ENCODE measurements at regions of chr17 and their contacts with region 1.

Region 1: DNA sequence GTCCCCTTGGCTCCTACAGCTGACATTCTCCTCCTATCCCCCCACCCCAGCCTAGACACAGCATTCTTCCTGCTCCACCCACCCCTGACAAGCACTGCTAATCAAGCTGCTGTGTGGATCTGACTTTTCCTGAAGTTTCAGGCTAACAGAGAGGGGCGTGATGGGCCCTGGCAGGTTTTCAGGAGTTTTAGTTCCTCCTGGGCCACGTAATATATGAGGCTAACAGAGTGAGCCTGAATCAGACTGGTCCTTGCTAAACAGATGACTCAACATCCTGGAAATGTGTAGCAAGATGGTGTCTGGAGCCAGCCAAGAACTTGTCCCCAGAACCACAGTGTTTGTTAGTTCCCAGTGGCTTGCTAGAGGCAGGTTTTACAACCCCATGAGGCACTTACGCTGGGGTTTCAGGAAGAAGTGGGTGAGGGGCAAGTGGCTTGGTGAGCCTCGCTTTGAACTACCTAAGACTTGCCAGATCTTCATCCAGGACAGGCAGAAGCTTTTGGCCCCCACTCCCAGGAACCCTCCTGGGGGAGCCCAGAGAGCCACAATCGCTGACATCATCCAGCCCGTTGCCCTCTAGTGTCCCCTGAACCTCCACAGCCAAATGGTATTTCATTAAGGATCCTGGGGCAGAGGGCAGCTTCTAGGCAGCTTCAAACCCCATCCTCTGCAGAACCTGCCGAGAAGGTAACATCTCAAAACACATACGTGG is 15.9 kb downstream of the TMEM92 start:
- DNase-seq: peak; percentile 96
- H3K4me3 ChIP-seq: peak overlapping the region; percentile 52
- CTCF ChIP-seq: no peak

Region 2: DNA sequence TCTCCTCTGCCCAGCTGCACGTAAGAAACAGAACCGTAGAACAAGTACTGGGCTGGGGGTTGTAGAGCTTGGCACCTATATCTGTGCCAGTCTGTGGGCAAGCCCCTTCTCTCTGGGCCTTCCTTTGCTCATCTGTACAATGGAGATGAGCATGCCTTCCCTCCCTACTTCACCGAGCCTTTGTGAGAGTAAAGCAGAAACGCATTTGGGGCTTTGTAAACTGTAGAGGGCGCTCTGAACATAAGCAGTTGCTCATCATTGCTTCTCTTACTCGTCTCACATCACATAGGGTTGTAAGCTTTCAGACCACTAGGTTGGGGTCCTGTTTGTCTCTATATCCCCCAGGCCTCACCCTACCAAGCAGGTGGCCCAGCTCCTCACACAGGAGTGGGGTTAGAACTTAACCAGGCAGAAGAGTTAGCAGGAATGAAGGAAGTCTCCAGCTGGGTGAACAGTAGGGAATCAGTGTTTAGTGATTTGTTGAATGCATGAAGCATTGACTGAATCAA is 175.2 kb before region 1 on chr17:
- CTCF ChIA-PET with region 1: interaction called, 62 read pairs
- POLR2A ChIA-PET with region 1: no interaction called
- DNase-seq: no peak
- H3K4me3 ChIP-seq: no peak overlapping the region
- CTCF ChIP-seq: peak; percentile 69

Region 3: DNA sequence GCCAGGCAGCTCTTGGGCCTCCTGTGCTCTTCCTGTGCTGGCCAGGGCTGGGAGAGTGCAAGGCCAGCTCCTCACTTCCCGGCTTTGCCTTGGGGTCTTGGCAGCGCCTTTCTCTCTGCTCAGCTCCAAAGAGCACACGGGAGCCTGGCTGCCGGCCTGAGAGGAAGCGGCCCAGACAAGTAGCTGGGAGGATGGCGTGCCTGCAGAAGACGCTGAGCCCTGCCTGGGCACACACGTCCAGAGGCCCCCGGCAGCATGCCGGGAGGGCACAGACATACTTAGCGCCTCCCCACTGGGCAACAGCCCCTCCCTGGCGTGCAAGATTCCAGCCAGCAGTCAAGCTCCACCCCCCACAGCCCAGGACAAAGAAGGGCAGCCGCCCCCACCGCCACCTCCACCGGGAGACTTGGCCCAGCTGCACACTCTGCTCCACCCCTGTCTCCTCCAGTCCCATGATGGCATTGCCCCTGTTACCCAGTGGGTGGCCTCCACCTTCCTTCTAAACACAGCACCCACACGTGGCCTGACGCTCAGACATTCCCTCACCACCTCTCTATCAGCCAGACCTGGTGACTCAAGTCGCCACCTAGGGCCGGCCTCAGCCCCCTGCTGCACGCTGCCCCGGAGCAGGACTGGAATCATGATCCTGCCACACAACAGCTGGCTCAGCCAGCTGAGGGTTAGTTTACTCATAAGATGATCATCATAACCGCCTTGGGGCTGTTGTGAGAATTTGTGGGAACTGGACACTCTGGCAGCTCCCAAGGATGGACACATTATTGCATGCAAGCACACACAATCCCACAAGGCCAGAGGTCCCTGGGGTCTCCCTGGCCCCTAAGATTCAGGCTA is 111.9 kb before region 1 on chr17:
- CTCF ChIA-PET with region 1: interaction called, 455 read pairs
- POLR2A ChIA-PET with region 1: interaction called, 33 read pairs
- DNase-seq: no peak
- H3K4me3 ChIP-seq: no peak overlapping the region
- CTCF ChIP-seq: peak; percentile 71

Region 4: DNA sequence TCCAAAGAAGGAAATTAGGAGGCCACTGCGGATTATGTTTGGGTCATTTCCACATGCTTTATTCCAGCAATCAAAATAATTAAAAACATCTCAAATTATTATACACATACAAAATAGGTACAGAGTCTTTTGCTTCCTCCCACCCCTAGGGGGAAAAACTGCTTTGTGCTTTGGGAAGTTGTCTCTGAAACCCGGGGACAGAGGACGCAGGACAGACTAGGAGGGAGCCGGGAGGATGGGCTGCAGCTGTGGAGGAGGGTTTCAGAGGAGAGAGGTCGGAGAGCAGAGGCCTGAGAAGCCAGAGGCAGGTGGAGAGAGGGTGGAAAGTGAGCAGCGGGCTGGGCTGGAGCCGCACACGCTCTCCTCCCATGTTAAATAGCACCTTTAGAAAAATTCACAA is 106.1 kb before region 1 on chr17:
- CTCF ChIA-PET with region 1: interaction called, 3 read pairs
- POLR2A ChIA-PET with region 1: interaction called, 33 read pairs
- DNase-seq: no peak
- H3K4me3 ChIP-seq: no peak overlapping the region; the same call in 1 of the 2 replicates
- CTCF ChIP-seq: peak; percentile 24

Region 5: GRCh38 chr17:50194934-50195865 is 94.9 kb before region 1 on chr17:
- CTCF ChIA-PET with region 1: interaction called, 12 read pairs
- POLR2A ChIA-PET with region 1: interaction called, 48 read pairs
- DNase-seq: no peak
- H3K4me3 ChIP-seq: peak overlapping the region; percentile 100
- CTCF ChIP-seq: peak; percentile 65

Region 6: DNA sequence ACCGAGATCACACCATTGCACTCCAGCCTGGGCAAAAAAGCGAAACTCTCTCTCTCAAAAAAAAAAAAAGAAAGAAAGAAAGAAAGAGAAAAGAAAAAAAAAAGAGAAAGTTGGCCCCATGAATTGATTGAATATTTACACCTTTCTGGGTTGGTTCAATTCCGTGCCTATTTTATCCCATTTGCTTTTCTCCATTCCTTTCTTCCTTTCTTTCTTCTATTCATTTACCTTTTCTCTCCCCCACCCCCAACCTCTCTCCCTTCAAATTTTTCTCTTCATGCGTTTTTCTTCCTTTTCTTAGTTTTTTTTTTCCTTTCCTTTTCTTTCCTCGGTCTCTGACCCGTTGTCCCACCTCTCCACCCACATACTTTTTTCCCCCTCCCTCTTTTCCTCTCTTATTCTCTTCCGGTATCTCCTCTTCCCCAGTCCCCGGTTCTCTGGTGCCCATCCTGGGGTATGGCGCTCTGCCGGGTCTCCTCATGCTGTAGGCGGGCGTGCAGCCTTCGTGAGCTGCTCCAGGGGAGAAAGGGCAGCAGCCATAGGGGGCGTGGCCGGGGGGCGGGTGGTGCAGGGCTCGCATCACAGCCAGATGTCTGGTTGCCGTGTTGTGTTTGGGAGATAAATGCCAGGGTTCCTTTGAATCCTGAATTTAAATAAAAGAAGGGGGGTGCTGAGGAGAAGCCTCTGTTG is 83.4 kb before region 1 on chr17:
- CTCF ChIA-PET with region 1: interaction called, 12 read pairs
- POLR2A ChIA-PET with region 1: interaction called, 48 read pairs
- DNase-seq: no peak
- H3K4me3 ChIP-seq: peak overlapping the region; percentile 36
- CTCF ChIP-seq: no peak

Region 7: GRCh38 chr17:50213026-50214022 is 76.8 kb before region 1 on chr17:
- CTCF ChIA-PET with region 1: interaction called, 5 read pairs
- POLR2A ChIA-PET with region 1: interaction called, 21 read pairs
- DNase-seq: no peak
- H3K4me3 ChIP-seq: no peak overlapping the region
- CTCF ChIP-seq: no peak

Region 8: GRCh38 chr17:50252781-50253180 is 37.4 kb before region 1 on chr17:
- CTCF ChIA-PET with region 1: no interaction called
- POLR2A ChIA-PET with region 1: no interaction called
- DNase-seq: no peak
- H3K4me3 ChIP-seq: no peak overlapping the region
- CTCF ChIP-seq: no peak

Measured in AG04449 (cell line).